ENCODE measurements at regions of chr13 and their contacts with region 1.

Region 1: GRCh38 chr13:91133941-91134802 is 213.3 kb upstream of the MIR17HG start:
- DNase-seq: peak; percentile 57
- H3K4me3 Mint-ChIP-seq: no peak overlapping the region
- H3K27ac Mint-ChIP-seq: no peak overlapping the region
- H3K4me1 Mint-ChIP-seq: no peaks in the 10 kb centered on the region
- H3K27me3 Mint-ChIP-seq: no peaks in the 10 kb centered on the region

Region 2: DNA sequence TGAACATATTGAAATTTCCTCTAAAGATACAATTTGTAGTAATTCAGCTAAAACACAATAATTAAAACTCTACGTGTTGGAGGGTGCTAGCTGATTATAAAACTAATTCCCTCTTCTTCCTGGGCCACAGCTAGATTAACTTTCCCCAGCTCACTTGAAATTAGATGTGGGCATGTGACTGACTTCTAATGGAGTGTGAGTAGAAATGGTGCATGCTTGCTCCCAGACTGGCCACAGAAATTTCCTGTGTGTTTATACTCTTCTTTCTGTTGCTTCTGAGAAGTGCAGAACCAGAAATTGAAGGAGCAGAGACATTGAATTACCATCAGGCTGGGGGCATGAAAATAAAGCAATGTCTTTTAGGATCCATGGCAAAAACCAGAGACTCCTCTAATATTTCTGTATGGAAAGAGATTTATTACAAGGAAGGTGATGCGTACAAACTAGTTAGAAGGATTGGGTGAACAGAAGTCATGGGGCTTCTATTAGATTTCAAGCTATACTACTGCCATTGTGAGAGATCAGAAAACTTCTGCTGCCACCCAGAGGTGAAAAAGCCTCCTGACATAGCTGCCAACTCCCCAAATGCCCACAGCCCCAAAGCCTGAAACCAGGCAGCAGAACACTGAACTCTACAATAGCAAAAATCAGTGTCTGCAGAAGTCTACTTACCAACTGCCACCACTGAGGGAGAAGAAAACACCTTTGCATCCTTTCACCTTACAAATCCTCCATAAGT is 165.8 kb before region 1 on chr13:
- CTCF ChIA-PET with region 1: no interaction called
- intact Hi-C with region 1: no loop called
- DNase-seq: no peak
- H3K4me3 Mint-ChIP-seq: no peak overlapping the region
- H3K27ac Mint-ChIP-seq: no peak overlapping the region
- H3K4me1 Mint-ChIP-seq: no peaks in the 10 kb centered on the region
- H3K27me3 Mint-ChIP-seq: no peaks in the 10 kb centered on the region

Region 3: GRCh38 chr13:91247768-91248167 is 113.6 kb after region 1 on chr13:
- CTCF ChIA-PET with region 1: interaction called, 9 read pairs
- intact Hi-C with region 1: loop called (anchors 1 kb)
- DNase-seq: no peak
- H3K4me3 Mint-ChIP-seq: no peak overlapping the region
- H3K27ac Mint-ChIP-seq: no peak overlapping the region
- H3K4me1 Mint-ChIP-seq: no peaks in the 10 kb centered on the region
- H3K27me3 Mint-ChIP-seq: peaks cover 6% of the 10 kb centered on the region

Region 4: DNA sequence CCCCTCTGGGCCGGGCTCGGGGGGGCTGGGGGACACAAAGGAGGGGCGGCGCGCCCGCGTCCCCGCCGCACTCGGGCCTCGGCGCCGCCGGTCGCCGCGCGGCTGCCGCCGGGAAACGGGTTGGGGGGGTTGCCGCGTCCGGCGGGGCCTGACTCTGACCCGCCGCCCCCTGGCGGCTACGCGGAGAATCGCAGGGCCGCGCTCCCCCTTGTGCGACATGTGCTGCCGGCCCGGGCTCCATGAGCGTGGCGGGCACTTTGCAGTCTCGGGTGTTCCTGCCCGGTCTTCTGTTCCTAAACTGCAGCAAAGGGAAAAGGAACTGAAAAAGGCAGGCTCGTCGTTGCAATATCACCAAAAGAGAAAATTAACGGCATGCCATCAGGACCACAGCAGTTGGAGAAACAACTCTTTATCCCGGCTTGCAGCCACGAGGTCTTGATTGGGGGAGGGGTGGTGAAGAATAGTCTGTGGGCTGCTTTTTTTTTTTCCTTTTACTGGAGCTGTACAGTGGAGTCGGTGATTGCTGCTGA is 214.8 kb after region 1 on chr13:
- CTCF ChIA-PET with region 1: no interaction called
- intact Hi-C with region 1: loop called (anchors 1 kb)
- DNase-seq: peak; percentile 94
- H3K4me3 Mint-ChIP-seq: peak overlapping the region; percentile 95
- H3K27ac Mint-ChIP-seq: peak overlapping the region; percentile 91
- H3K4me1 Mint-ChIP-seq: peaks cover 45% of the 10 kb centered on the region
- H3K27me3 Mint-ChIP-seq: no peaks in the 10 kb centered on the region

Region 5: GRCh38 chr13:91375116-91375729 is 241.1 kb after region 1 on chr13:
- CTCF ChIA-PET with region 1: no interaction called
- intact Hi-C with region 1: no loop called
- DNase-seq: peak; percentile 31
- H3K4me3 Mint-ChIP-seq: no peak overlapping the region
- H3K27ac Mint-ChIP-seq: no peak overlapping the region
- H3K4me1 Mint-ChIP-seq: peaks cover 4% of the 10 kb centered on the region
- H3K27me3 Mint-ChIP-seq: peaks cover 5% of the 10 kb centered on the region

Region 6: GRCh38 chr13:91459485-91459884 is 325.3 kb after region 1 on chr13:
- CTCF ChIA-PET with region 1: no interaction called
- intact Hi-C with region 1: loop called (anchors 10 kb)
- DNase-seq: no peak
- H3K4me3 Mint-ChIP-seq: no peak overlapping the region
- H3K27ac Mint-ChIP-seq: no peak overlapping the region
- H3K4me1 Mint-ChIP-seq: no peaks in the 10 kb centered on the region
- H3K27me3 Mint-ChIP-seq: peaks cover 10% of the 10 kb centered on the region

Region 7: DNA sequence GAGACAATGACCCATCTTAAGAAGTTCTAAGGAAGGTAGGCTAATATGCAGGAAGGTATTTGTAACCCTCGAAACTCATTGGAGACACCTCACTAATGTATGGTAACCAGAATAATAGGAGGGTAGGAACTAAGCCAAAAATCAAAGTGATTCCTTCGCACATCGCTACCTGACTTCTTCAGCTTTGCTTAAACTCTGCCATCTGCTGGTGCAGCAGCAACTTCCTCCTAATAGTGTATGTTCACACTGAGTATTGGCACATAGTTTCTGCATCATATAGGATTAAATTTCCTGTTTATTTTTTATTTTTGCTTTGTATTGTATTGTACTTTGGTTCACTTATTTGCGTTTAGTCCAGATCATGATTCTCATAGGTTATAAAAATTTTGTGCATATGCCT is 940.5 kb after region 1 on chr13:
- CTCF ChIA-PET with region 1: no interaction called
- intact Hi-C with region 1: loop called (anchors 5 kb)
- DNase-seq: no peak
- H3K4me3 Mint-ChIP-seq: no peak overlapping the region
- H3K27ac Mint-ChIP-seq: no peak overlapping the region
- H3K4me1 Mint-ChIP-seq: no peaks in the 10 kb centered on the region
- H3K27me3 Mint-ChIP-seq: no peaks in the 10 kb centered on the region